Endothelial cell of umbilical vein (primary cell): ENCODE measurements at regions of chr21 and their contacts with region 1.

Region 1: DNA sequence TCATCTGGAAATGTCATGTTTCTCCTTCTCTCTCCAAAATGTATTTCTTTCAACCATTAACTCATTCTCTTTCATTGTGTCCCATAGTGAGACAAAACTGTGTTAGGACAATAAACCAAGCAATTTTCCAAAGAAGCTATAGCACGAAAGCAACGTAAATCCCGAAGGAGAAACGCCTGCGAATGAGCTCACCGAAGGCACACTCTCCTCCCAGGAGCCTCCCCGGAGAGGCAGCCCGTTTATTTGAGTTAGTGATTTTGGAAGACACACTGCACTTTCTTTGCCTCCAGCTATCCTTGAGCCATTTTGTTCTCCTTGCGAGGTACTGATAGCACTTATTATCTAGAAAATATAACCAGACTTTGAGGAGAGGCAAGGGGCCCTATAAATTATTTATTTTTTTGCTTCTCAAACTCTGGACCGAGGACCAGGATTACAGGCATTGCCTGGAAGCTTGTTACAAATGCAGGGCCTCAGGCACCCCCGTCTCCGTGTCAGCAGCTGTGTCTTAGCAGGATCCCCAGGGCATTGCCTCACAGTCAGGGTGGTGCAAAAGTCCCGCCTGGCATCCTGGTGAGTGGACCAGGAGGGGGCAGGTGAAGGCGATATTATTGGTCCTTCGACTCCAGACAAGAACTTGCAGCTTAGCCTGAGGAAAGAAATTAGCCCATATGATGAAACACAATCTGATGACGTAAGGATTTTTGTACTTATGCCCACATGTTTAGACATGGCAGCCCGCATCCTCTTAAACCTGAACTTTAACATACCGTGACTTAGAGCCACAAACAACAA is 41.0 kb downstream of the RSPH1 start:
- DNase-seq: no peak
- H3K4me3 ChIP-seq: no peak overlapping the region
- H3K27ac ChIP-seq: no peak overlapping the region
- H3K4me1 ChIP-seq: no peaks in the 10 kb centered on the region
- H3K27me3 ChIP-seq: peaks cover 2 to 5% of the 10 kb centered on the region in 2 experiments
- CTCF ChIP-seq: no peak
- POLR2A ChIP-seq: no peak

Region 2: DNA sequence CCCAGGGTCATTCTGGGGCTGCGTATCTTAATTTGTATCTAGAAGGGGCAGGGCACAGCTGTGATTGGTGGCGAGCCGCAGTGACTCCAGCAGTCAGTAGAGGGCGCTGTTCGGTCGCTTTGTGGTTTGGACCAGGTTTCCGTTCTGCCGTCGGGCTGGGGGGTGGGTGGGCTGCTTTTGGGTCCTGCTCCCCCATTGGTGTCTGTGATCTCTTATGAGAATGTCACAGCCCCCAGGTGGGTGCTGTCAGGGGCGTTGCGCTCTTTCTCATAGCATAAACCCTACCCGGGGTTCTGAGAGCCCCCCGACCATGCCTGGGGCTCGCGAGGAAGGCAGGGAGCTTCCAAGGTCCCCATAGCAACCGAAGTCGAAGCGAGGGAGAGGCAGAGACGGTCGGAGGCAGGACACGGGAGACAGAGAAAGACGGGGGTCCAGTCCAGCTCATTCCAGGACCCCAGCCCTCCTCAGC is 145.2 kb before region 1 on chr21:
- CTCF ChIA-PET with region 1: interaction called, 3 read pairs
- POLR2A ChIA-PET with region 1: no interaction called
- dilution Hi-C with region 1: no loop called
- intact Hi-C with region 1: loop called (anchors 2 kb)
- DNase-seq: peak; percentile 30
- H3K4me3 ChIP-seq: no peak overlapping the region
- H3K27ac ChIP-seq: no peak overlapping the region
- H3K4me1 ChIP-seq: no peaks in the 10 kb centered on the region
- H3K27me3 ChIP-seq: peaks cover 2 to 6% of the 10 kb centered on the region in 2 experiments
- CTCF ChIP-seq: peak; percentile 71 to 88
- POLR2A ChIP-seq: no peak

Region 3: GRCh38 chr21:42337830-42338728 is 116.9 kb before region 1 on chr21:
- CTCF ChIA-PET with region 1: interaction called, 8 read pairs
- POLR2A ChIA-PET with region 1: no interaction called
- dilution Hi-C with region 1: no loop called
- intact Hi-C with region 1: loop called (anchors 1 kb)
- DNase-seq: peak; percentile 53
- H3K4me3 ChIP-seq: no peak overlapping the region
- H3K27ac ChIP-seq: no peak overlapping the region
- H3K4me1 ChIP-seq: no peaks in the 10 kb centered on the region
- H3K27me3 ChIP-seq: peaks cover 10 to 32% of the 10 kb centered on the region in 2 experiments
- CTCF ChIP-seq: peak; percentile 59 to 62
- POLR2A ChIP-seq: no peak

Region 4: GRCh38 chr21:42381334-42381984 is 73.5 kb before region 1 on chr21:
- CTCF ChIA-PET with region 1: interaction called, 3 read pairs
- POLR2A ChIA-PET with region 1: no interaction called
- dilution Hi-C with region 1: no loop called
- intact Hi-C with region 1: loop called (anchors 1 kb)
- DNase-seq: peak; percentile 31
- H3K4me3 ChIP-seq: no peak overlapping the region
- H3K27ac ChIP-seq: no peak overlapping the region
- H3K4me1 ChIP-seq: no peaks in the 10 kb centered on the region
- H3K27me3 ChIP-seq: no peaks in the 10 kb centered on the region
- CTCF ChIP-seq: peak; percentile 68 to 69
- POLR2A ChIP-seq: no peak

Region 5: GRCh38 chr21:42414928-42415769 is 39.8 kb before region 1 on chr21:
- CTCF ChIA-PET with region 1: no interaction called
- POLR2A ChIA-PET with region 1: no interaction called
- dilution Hi-C with region 1: no loop called
- intact Hi-C with region 1: no loop called
- DNase-seq: peak; percentile 16
- H3K4me3 ChIP-seq: no peak overlapping the region
- H3K27ac ChIP-seq: no peak overlapping the region
- H3K4me1 ChIP-seq: no peaks in the 10 kb centered on the region
- H3K27me3 ChIP-seq: peaks cover 3 to 10% of the 10 kb centered on the region in 2 experiments
- CTCF ChIP-seq: no peak
- POLR2A ChIP-seq: no peak

Region 6: GRCh38 chr21:42485701-42486471 is 30.9 kb after region 1 on chr21:
- CTCF ChIA-PET with region 1: no interaction called
- POLR2A ChIA-PET with region 1: no interaction called
- dilution Hi-C with region 1: no loop called
- intact Hi-C with region 1: no loop called
- DNase-seq: no peak
- H3K4me3 ChIP-seq: no peak overlapping the region
- H3K27ac ChIP-seq: no peak overlapping the region
- H3K4me1 ChIP-seq: no peaks in the 10 kb centered on the region
- H3K27me3 ChIP-seq: peaks cover 17 to 18% of the 10 kb centered on the region in 2 experiments
- CTCF ChIP-seq: no peak
- POLR2A ChIP-seq: no peak

Region 7: DNA sequence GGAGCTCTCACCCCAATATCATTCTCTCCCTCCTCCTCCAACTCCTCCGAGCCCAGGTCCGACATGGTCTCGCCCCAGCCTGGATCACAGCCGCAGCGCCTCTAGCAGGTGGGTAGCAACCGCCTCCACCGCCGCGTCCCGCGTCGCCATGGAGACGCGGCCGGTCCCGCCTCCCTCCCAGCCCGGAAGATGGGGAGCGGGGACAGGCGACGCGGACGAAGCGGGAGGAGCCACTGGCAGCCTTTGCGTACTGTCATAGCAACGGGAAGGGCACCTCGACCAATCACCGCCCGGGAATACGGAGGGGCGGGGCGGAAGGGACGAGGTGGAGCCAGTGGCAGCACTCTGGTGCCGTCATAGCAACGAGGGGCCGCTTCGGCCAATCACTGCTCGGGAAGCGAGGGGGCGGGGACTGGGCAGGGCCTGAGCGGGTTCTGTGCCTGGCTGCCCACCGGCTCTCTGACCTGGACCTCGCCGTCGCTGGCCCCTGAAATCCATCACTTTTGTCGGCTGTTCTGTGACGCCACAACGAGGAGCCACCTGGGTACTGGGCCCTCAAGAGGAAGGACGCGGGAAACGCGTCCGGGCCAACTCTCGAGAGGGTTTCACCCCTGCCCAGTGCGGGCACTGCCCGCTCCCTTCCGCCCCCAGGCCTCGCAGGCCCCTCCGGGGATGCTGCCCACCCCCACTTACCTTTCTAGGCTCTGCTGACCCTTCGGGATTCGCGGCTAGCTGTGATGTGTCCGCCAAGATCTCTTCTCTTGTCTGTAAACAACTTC is 41.3 kb after region 1 on chr21 and contains the start of gene RSPH1:
- CTCF ChIA-PET with region 1: no interaction called
- POLR2A ChIA-PET with region 1: no interaction called
- dilution Hi-C with region 1: no loop called
- intact Hi-C with region 1: loop called (anchors 1 kb)
- DNase-seq: peak; percentile 99
- H3K4me3 ChIP-seq: peak within 1 kb of the TSS; percentile 50 to 59 (median 54)
- H3K27ac ChIP-seq: peak within 1 kb of the TSS; percentile 14
- H3K4me1 ChIP-seq: peaks cover 13% of the 10 kb centered on the region
- H3K27me3 ChIP-seq: peaks cover 6 to 7% of the 10 kb centered on the region in 2 experiments
- CTCF ChIP-seq: no peak
- POLR2A ChIP-seq: no peak
- total RNA-seq, gene RSPH1: not detected in 2 replicates